ENCODE measurements at regions of chr3 and their contacts with region 1.

Region 1: DNA sequence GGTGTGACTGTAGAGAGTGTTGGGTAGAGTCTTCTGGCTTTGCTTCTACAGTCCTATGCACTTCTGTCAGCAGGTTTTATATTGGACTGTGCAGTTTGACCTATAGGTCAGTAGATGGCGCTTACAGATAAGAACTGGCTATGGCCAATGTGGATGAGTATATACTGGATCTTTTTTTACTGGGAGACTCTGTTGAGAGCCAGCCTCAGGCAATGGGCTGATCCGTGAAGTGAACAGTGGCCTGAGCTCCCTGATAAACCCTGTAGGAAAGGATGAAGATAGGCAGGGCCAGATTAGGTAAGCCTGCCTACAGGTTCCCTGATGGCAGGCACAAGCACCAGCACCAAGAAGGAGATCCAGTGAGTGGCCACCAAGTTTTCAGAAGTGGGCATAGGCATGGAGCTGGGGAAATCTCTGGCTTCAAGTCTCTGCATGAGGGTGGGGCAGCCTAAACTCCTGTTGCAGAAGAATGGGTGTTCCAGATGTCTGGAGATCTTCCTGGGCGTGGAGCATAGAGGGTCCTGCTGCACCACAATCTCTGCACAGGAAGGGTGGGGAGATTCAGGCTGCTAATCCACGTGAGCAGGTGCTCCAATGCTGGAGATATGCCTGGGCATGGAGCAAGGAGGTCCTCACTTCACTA is 326.0 kb upstream of the SGO1 start:
- DNase-seq: no peak

Region 2: GRCh38 chr3:21484057-21484827 is 972.3 kb after region 1 on chr3:
- intact Hi-C with region 1: loop called in 1 of 2 experiments (anchors 5 kb)
- DNase-seq: no peak

Region 3: GRCh38 chr3:21573291-21573690 is 1061.3 kb after region 1 on chr3:
- intact Hi-C with region 1: no loop called
- DNase-seq: no peak